HCT116 (cell line): ENCODE measurements at regions of chr1 and their contacts with region 1.

Region 1: GRCh38 chr1:246843876-246844275 is 87.9 kb downstream of the AHCTF1 start:
- DNase-seq: no peak
- ATAC-seq: no peak
- H3K4me3 ChIP-seq: no peak overlapping the region
- H3K27ac ChIP-seq: no peak overlapping the region
- H3K4me1 ChIP-seq: no peaks in the 10 kb centered on the region
- H3K27me3 ChIP-seq: no peaks in the 10 kb centered on the region
- CTCF ChIP-seq: no peak
- POLR2A ChIP-seq: no peak
- RAD21 ChIP-seq: no peak

Region 2: DNA sequence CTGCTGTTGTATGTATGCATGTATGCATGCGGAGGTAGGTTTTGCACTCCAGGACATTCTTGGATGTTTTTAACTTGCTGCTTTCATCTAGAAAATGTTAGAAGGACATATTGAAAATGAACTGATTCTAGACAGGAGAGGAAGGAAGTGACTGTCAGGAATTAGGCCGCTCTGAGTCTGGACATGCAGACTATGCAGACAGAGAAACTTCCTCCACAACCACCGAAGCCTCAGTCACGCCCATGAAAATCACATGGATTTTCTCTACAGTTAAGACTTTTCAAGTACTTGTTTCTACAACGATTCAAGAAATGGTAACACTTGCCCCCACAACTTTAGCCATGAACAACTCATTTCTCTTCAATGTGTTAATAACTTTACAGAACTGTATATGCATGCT is 547.9 kb before region 1 on chr1:
- CTCF ChIA-PET with region 1: no interaction called
- POLR2A ChIA-PET with region 1: no interaction called
- RAD21 ChIA-PET with region 1: no interaction called
- intact Hi-C with region 1: no loop called
- DNase-seq: no peak
- ATAC-seq: no peak
- H3K4me3 ChIP-seq: no peak overlapping the region
- H3K27ac ChIP-seq: no peak overlapping the region
- H3K4me1 ChIP-seq: peaks cover 0 to 6% of the 10 kb centered on the region in 2 experiments; a peak in 1 of 4 replicates
- H3K27me3 ChIP-seq: no peaks in the 10 kb centered on the region
- CTCF ChIP-seq: no peak
- POLR2A ChIP-seq: no peak
- RAD21 ChIP-seq: no peak

Region 3: GRCh38 chr1:246897302-246897701 is 53.4 kb after region 1 on chr1:
- CTCF ChIA-PET with region 1: no interaction called
- POLR2A ChIA-PET with region 1: no interaction called
- RAD21 ChIA-PET with region 1: no interaction called
- intact Hi-C with region 1: loop called (anchors 5 kb)
- DNase-seq: no peak
- ATAC-seq: no peak
- H3K4me3 ChIP-seq: no peak overlapping the region
- H3K27ac ChIP-seq: no peak overlapping the region
- H3K4me1 ChIP-seq: no peaks in the 10 kb centered on the region
- H3K27me3 ChIP-seq: no peaks in the 10 kb centered on the region
- CTCF ChIP-seq: no peak
- POLR2A ChIP-seq: no peak
- RAD21 ChIP-seq: no peak